ENCODE measurements at regions of chr4 and their contacts with region 1.

Region 1: DNA sequence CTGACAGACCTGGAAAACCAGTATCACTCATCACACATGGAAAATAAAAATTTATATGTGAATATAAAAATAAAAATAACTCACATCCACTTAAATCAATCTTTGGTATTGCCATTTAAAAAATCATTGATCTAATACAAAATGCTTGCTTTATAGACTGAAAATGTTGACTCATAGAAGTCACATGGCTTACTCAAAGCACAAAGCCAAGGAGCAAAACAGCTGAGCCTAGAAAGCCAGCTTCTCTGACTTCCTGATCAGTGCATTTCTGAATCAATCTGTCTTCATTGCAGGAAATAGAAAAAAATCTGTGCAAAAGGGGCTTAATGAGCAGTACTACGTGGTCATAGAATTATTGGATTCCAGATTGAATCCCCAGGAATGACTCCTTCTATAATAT is 176.9 kb upstream of the HS3ST1 start:
- DNase-seq: no peak
- H3K4me3 ChIP-seq: no peak overlapping the region
- H3K27ac ChIP-seq: no peak overlapping the region
- H3K4me1 ChIP-seq: no peaks in the 10 kb centered on the region
- H3K27me3 ChIP-seq: no peaks in the 10 kb centered on the region
- CTCF ChIP-seq: no peak
- POLR2A ChIP-seq: no peak

Region 2: DNA sequence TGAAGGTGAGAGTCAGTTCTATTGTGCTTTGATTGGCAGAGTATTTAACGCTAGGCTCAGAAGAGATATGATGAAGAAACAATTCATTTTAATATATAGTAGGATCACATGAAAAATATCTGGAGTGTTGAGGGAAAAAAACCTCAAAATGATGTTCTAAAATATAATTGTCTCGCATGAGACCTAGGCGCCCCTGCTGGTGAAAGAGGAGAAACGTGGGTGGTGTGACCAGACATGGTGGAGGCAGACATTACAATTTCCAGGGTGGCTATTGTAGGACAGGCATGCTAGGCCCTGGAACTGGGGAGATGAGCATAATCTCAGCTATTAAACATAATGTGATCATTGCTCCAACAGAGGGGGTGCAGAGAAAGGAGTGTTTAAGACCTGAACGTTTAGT is 386.9 kb before region 1 on chr4:
- intact Hi-C with region 1: no loop called
- DNase-seq: no peak
- H3K4me3 ChIP-seq: no peak overlapping the region
- H3K27ac ChIP-seq: no peak overlapping the region
- H3K4me1 ChIP-seq: no peaks in the 10 kb centered on the region
- H3K27me3 ChIP-seq: no peaks in the 10 kb centered on the region
- CTCF ChIP-seq: no peak
- POLR2A ChIP-seq: no peak

Region 3: GRCh38 chr4:11446155-11446811 is 159.3 kb before region 1 on chr4:
- intact Hi-C with region 1: no loop called
- DNase-seq: no peak
- H3K4me3 ChIP-seq: no peak overlapping the region
- H3K27ac ChIP-seq: no peak overlapping the region
- H3K4me1 ChIP-seq: no peaks in the 10 kb centered on the region
- H3K27me3 ChIP-seq: no peaks in the 10 kb centered on the region
- CTCF ChIP-seq: no peak
- POLR2A ChIP-seq: no peak

Region 4: GRCh38 chr4:12071316-12071715 is 465.7 kb after region 1 on chr4:
- intact Hi-C with region 1: loop called (anchors 10 kb)
- DNase-seq: peak; percentile 12 to 16
- H3K4me3 ChIP-seq: no peak overlapping the region
- H3K27ac ChIP-seq: no peak overlapping the region
- H3K4me1 ChIP-seq: no peaks in the 10 kb centered on the region
- H3K27me3 ChIP-seq: no peaks in the 10 kb centered on the region
- CTCF ChIP-seq: no peak
- POLR2A ChIP-seq: no peak

Measured in thyroid gland (tissue), 4 donors.